Sigmoid colon (tissue), 7 donors: ENCODE measurements at regions of chr1 and their contacts with region 1.

Region 1: GRCh38 chr1:41381692-41382477 is 20.7 kb downstream of the FOXO6 start:
- DNase-seq: peak; percentile 83
- H3K4me3 ChIP-seq: peak overlapping the region; percentile 56 to 69 (median 66)
- H3K27ac ChIP-seq: peak overlapping the region; percentile 96 to 100 (median 98)
- H3K4me1 ChIP-seq: peaks cover 0 to 53% (median 46%) of the 10 kb centered on the region in 4 donors
- H3K27me3 ChIP-seq: no peaks in the 10 kb centered on the region
- CTCF ChIP-seq: no peak
- EP300 ChIP-seq: no peak
- POLR2A ChIP-seq: no peak

Region 2: DNA sequence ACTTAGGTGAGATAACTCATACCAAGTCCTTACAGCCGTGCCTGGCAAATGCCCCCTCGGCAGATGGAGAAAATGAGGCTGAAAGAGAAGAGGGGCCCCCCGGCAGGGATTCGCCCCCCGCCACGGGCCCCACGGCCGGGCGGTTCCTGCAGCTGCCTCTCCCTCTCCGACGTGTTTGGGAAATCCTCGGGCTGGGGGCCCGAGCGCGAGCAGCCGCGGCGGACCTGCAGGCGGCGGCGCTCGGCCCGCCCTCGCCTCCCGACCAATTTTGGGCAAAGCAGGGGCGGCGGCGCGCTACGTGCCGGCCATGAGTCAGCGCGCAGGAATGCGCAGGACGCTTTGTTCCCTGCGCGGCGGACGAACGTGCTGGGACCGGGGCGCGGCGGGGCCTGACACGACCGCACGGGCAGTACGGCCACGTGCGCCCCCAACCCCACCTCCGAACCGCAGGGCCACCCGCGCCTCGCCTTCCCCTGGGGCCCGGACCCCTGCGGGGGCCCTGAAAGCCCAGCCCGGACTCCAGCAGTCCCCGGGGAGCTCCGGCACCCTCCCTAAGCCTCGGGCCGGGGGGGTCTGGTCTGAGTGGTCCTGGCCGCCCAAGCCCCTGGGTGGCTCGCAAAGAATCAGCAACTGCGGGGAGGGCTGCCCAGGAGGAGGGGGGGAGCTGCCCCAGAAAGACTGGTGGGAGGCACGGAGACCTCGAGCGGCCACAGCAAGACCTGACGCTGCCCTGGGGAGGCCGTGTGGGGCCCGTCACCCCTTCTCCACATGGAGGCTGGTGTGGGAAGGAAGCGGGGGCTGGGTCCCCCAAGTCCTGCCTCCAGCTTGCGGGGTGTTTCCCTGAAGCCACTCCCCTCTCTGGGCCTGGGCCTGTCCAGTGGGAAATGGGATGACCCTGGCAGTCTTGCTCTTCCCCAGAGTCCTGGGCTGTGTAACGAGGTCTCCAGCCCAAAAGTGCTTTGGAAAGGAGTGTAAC is 114.5 kb after region 1 on chr1:
- intact Hi-C with region 1: loop called (anchors 5 kb)
- DNase-seq: peak; percentile 97
- H3K4me3 ChIP-seq: peak overlapping the region in 3 of 4 donors; percentile 39 to 44 (median 42)
- H3K27ac ChIP-seq: peak overlapping the region; percentile 88 to 92 (median 90)
- H3K4me1 ChIP-seq: peaks cover 0 to 62% (median 51%) of the 10 kb centered on the region in 4 donors
- H3K27me3 ChIP-seq: no peaks in the 10 kb centered on the region
- CTCF ChIP-seq: peak in 2 of 4 experiments; percentile 9 to 17
- EP300 ChIP-seq: peak; percentile 90 to 99 (median 97)
- POLR2A ChIP-seq: peak in 1 of 2 donors; percentile 58